Uterus (tissue), 4 donors: ENCODE measurements at regions of chr10 and their contacts with region 1.

Region 1: DNA sequence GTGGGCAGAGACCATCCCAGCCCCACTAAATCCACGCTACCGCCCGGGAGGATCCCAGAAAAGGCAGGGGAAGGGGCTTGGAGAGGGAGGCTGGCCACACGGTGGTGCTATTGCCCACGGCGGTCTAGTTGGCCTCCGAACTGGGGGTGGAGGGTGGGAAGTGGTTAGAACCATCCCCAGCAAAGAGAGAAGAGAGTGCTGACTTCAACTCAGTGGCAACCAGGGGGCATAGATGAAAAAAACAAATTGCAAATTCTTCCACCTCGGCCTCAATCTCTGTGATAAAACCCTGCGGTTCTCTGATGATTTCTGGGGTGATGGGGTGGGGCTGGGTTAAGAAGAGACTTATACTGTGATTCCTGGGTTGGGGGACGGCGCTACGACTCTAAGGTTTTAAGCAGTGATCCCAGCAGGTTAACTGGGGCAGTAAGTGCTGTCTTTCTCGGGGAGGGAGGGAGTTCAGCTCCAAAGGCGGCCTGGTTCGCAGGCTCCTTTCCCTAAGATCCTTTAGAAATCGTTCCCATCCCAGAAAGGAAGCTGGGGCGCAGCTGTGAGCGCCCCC is 154.5 kb upstream of the LYZL2 start:
- DNase-seq: peak; percentile 89 to 90
- H3K4me3 ChIP-seq: peak overlapping the region; percentile 61 to 74
- H3K27ac ChIP-seq: peak overlapping the region; percentile 96 to 97
- H3K4me1 ChIP-seq: no peaks in the 10 kb centered on the region
- H3K27me3 ChIP-seq: no peaks in the 10 kb centered on the region
- CTCF ChIP-seq: peak; percentile 83 to 94 (median 92)
- POLR2A ChIP-seq: peak in 1 of 2 donors; percentile 23

Region 2: GRCh38 chr10:30709229-30709628 is 74.8 kb before region 1 on chr10:
- intact Hi-C with region 1: no loop called
- DNase-seq: no peak
- H3K4me3 ChIP-seq: no peak overlapping the region
- H3K27ac ChIP-seq: no peak overlapping the region
- H3K4me1 ChIP-seq: no peaks in the 10 kb centered on the region
- H3K27me3 ChIP-seq: no peaks in the 10 kb centered on the region
- CTCF ChIP-seq: no peak
- POLR2A ChIP-seq: no peak

Region 3: DNA sequence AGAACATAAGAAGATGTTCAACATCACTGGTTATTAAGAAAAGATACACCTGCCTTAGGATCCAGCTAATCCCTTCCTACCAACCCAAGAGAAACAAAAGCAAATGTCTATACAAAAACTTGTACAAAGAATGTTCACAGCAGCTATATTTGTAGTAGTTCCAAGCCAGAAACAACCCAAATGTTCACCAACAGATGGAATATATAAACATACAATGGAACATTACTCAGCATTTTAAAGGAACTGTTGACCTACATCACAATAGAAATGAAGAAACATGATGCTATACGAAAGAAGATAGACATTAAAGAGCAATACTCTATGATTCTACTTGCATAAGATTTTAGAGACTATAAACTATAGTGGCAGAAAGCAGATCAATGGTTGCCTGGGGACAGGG is 98.3 kb after region 1 on chr10:
- intact Hi-C with region 1: no loop called
- DNase-seq: no peak
- H3K4me3 ChIP-seq: no peak overlapping the region
- H3K27ac ChIP-seq: no peak overlapping the region
- H3K4me1 ChIP-seq: no peaks in the 10 kb centered on the region
- H3K27me3 ChIP-seq: no peaks in the 10 kb centered on the region
- CTCF ChIP-seq: no peak
- POLR2A ChIP-seq: no peak

Region 4: GRCh38 chr10:31031558-31032257 is 247.7 kb after region 1 on chr10 and contains the start of gene ZNF438:
- intact Hi-C with region 1: loop called (anchors 10 kb)
- DNase-seq: peak; percentile 95 to 98
- H3K4me3 ChIP-seq: peak within 1 kb of the TSS; percentile 64 to 71
- H3K27ac ChIP-seq: peak within 1 kb of the TSS; percentile 100
- H3K4me1 ChIP-seq: peaks cover 6 to 7% of the 10 kb centered on the region in 2 donors
- H3K27me3 ChIP-seq: no peaks in the 10 kb centered on the region
- CTCF ChIP-seq: peak; percentile 38 to 82 (median 60)
- POLR2A ChIP-seq: peak; percentile 78 to 94
- total RNA-seq, gene ZNF438: 5.8 to 24.6 (median 18.4) TPM

Region 5: GRCh38 chr10:31318854-31319601 is 535.0 kb after region 1 on chr10 and contains the start of gene ZEB1:
- intact Hi-C with region 1: loop called (anchors 5 kb)
- DNase-seq: peak; percentile 86 to 95
- H3K4me3 ChIP-seq: peak within 1 kb of the TSS; percentile 91 to 93
- H3K27ac ChIP-seq: peak within 1 kb of the TSS; percentile 97 to 99
- H3K4me1 ChIP-seq: no peaks in the 10 kb centered on the region
- H3K27me3 ChIP-seq: no peaks in the 10 kb centered on the region
- CTCF ChIP-seq: peak; percentile 15 to 67 (median 60)
- POLR2A ChIP-seq: peak; percentile 37 to 48
- total RNA-seq, gene ZEB1: 97.6 to 229 (median 210) TPM